Posterior cingulate gyrus (tissue), 11 donors: ENCODE measurements at regions of chr5 and their contacts with region 1.

Region 1: GRCh38 chr5:148730943-148731861 is 76.9 kb upstream of the HTR4 start:
- DNase-seq: peak in 7 of 10 donors; percentile 51 to 88 (median 66)

Region 2: GRCh38 chr5:148179234-148179824 is 551.9 kb before region 1 on chr5:
- intact Hi-C with region 1: loop called (anchors 2 kb)
- DNase-seq: peak in 1 of 10 donors; percentile 7

Region 3: DNA sequence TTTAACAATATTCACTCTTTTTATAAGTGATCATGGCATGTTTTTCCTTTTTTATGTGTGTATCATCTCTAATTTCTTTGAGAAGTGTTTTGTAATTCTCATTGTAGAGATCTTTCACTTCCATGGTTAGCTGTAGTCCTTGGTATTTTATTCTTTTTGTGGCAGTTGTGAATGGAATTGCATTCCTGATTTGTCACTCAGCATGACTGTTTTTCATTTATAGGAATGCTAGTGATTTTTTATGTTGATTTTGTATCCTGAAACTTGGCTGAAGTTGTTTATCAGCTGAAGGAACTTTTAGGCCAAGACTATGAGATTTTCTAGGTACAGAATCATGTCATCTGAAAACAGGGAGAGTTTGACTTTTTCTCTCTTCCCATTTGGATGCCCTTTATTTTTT is 475.7 kb before region 1 on chr5:
- intact Hi-C with region 1: no loop called
- DNase-seq: no peak

Region 4: GRCh38 chr5:148443998-148444397 is 287.2 kb before region 1 on chr5:
- intact Hi-C with region 1: loop called (anchors 1 kb)
- DNase-seq: peak in 3 of 10 donors; percentile 20 to 41 (median 35)

Region 5: GRCh38 chr5:148585988-148586387 is 145.2 kb before region 1 on chr5:
- intact Hi-C with region 1: no loop called
- DNase-seq: no peak

Region 6: GRCh38 chr5:149035372-149035790 is 304.2 kb after region 1 on chr5:
- intact Hi-C with region 1: loop called (anchors 1 kb)
- DNase-seq: peak; percentile 68 to 97 (median 83)

Region 7: GRCh38 chr5:149114403-149115312 is 383.5 kb after region 1 on chr5:
- intact Hi-C with region 1: loop called (anchors 1 kb)
- DNase-seq: peak in 9 of 10 donors; percentile 34 to 95 (median 72)

Region 8: DNA sequence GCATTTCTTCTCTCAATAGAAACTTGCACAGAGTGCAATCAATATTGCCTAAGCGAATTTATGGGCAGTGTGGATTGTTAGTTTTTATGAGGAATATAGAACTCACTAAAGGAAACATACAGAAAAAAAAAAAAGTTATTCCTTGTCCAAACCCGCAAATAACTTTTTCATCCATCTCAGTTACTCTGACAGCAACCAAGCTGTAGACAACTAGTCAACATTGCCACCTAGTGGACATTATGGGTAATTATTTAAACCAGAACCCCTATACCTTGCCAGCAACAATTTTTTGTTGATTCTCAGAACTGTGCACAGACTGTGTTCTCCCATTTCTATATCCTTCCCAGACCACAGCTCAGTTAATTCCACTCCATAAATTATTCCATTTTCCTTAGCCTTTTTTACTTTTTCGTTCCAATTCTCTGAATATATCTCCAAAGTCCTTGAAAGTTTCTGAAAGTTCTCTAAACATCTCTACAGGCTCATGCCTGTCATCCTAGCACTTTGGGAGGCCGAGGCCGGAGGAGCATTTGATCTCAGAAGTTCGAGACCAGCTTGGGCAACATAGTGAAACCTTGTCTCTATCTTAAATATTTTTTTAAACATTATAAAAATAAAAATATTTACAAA is 537.8 kb after region 1 on chr5:
- intact Hi-C with region 1: loop called (anchors 5 kb)
- DNase-seq: no peak